HEK293 (cell line): ENCODE measurements at regions of chr17 and their contacts with region 1.

Region 1: DNA sequence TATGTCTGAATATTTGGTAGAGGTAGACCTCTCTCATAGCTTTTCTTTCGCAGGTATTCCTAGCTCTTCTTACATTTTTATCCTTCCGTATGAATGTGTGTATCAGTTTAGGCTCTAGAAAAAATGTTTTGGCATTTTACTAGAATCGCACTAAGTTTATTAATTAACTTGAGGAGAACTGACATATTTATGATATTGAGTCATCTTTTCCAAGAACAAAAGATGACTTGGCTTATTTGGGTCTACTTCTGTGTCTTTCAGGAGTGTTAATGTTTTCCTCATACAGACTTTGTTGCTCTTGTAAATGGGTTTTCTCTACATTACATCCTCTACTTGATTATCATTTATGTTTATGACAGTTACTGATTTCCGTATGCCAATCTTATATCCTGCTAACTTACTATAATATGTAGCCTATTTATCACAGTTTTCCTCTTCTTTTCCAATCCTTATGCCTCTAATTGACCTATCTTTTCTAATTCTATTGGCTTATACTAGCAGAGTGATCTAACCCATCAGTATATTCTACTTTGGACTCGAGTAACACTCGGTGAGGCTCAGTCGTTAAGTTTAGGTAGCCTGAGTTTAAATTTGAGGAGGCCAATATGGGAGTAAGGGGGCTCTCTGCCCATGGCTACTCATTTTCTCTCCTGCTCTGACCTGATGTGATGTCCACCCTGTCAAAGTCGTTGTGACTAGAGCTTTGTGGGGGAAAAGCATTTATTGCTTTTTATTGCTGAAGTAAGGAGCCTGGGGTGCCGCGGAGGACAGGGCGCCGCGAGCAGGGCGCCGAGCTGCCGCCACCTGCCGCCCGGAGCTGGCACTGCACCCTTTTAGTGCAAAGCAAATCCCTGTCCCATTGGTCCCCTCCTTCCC is 20.0 kb downstream of the ST6GALNAC1 start:
- H3K4me3 ChIP-seq: peak overlapping the region; percentile 21
- H3K27ac ChIP-seq: no peak overlapping the region
- H3K4me1 ChIP-seq: no peaks in the 10 kb centered on the region
- CTCF ChIP-seq: peak; percentile 82

Region 2: GRCh38 chr17:76523084-76524037 is 100.1 kb before region 1 on chr17:
- CTCF ChIA-PET with region 1: interaction called, 56 read pairs
- POLR2A ChIA-PET with region 1: no interaction called
- H3K4me3 ChIP-seq: no peak overlapping the region
- H3K27ac ChIP-seq: no peak overlapping the region
- H3K4me1 ChIP-seq: peaks cover 8% of the 10 kb centered on the region
- CTCF ChIP-seq: peak; percentile 98

Region 3: DNA sequence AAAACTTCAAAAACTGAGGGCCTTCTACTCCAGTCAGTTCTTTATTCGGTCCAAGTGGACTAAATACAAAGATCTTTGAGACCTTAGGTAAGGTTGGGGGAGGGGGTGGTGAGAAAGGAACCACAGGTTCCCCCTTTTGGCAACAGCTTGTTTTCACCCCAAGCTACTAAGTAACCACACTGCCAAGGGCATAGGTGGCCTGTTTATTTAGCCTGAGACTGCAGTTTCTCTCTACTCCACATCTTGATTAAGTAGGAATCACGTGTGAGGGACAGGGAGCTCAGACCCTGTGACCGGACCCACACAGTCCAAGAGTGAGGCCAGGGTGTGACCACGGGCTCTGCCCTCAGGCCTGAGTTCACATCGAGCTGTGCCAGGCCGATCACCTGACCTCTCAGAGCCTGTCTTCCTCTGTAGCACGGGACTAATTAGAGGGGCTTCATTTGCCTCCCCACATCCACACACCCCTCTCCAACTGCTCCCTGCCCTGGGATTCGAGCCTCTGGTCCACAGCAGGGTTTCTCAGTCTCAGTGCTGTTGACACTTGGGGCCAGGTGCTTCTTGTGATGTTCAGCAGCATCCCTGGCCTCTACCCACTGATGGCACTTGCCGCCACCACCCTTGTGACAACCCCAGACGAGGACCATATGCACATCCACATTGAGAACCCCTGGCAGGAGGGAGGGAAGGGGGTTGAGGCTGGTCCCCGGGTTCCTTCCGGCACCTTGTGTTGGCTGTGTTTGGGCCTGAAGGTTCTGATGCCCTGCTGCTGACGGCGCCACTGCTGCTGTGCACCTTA is 55.7 kb before region 1 on chr17:
- CTCF ChIA-PET with region 1: interaction called, 20 read pairs
- POLR2A ChIA-PET with region 1: interaction called, 6 read pairs
- H3K4me3 ChIP-seq: no peak overlapping the region
- H3K27ac ChIP-seq: 0 out of 2 replicates have a peak overlapping the region, but pooled peaks have one; percentile 5
- H3K4me1 ChIP-seq: no peaks in the 10 kb centered on the region
- CTCF ChIP-seq: no peak

Region 4: GRCh38 chr17:76612977-76613851 is 10.3 kb before region 1 on chr17:
- CTCF ChIA-PET with region 1: interaction called, 48 read pairs
- POLR2A ChIA-PET with region 1: interaction called, 3 read pairs
- H3K4me3 ChIP-seq: no peak overlapping the region
- H3K27ac ChIP-seq: no peak overlapping the region
- H3K4me1 ChIP-seq: 0 out of 2 replicates have a peak, but pooled peaks cover 3% of the 10 kb centered on the region
- CTCF ChIP-seq: no peak

Region 5: GRCh38 chr17:76659928-76660614 is 36.6 kb after region 1 on chr17:
- CTCF ChIA-PET with region 1: interaction called, 19 read pairs
- POLR2A ChIA-PET with region 1: no interaction called
- H3K4me3 ChIP-seq: no peak overlapping the region
- H3K27ac ChIP-seq: peak overlapping the region; percentile 44; the same call in 1 of the 2 replicates
- H3K4me1 ChIP-seq: peaks cover 10% of the 10 kb centered on the region
- CTCF ChIP-seq: no peak

Region 6: DNA sequence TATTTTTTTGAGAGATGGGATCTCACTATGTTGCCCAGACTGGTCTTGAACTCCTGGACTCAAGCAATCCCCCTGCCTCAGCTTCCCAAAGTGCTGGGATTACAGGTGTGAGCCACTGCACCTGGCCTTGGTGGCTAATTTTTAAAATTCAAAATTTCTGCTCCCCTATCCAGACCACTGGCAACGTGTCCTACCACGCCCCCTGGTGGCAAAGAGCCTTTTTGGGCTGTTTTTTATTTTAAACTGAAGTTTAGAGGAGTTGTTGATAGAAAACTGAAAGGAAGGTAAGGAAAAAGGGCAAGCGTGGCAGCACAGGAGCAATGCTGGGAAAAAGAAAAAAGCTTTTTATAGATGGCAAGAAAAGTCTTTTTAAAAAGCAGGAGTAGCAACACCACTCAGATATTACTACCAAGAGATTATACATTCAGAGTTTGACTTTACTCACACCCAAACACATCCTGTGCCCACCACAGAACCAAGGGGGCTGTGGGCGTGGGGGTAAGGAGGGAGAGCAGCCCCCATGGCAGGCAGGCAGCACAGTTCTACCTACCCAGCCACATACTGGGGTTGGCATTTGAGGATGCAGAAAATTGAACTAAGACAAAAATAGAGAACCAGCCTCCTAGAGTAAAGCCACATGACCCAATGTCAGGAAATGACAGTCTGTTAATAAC is 91.5 kb after region 1 on chr17:
- CTCF ChIA-PET with region 1: interaction called, 15 read pairs
- POLR2A ChIA-PET with region 1: no interaction called
- H3K4me3 ChIP-seq: no peak overlapping the region
- H3K27ac ChIP-seq: no peak overlapping the region
- H3K4me1 ChIP-seq: peaks cover 35% of the 10 kb centered on the region
- CTCF ChIP-seq: peak; percentile 66; the same call in 1 of the 2 replicates

Region 7: DNA sequence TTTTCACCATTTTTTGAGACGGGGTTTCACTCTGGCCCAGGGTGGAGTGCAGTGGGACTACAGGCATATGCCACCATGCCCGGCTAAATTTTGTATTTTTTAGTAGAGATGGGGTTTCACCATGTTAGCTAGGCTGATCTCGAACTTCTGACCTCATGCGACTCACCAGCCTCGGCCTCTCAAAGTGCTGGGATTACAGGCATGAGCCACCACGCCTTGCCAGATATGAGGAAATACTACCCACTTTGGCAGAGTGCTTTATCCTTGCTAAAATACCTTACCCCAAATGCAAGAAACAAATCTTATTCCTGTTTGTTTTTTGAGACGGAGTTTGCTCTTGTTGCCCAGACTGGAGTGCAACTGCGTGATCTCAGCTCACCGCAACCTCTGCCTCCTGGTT is 181.8 kb after region 1 on chr17:
- CTCF ChIA-PET with region 1: no interaction called
- POLR2A ChIA-PET with region 1: no interaction called
- H3K4me3 ChIP-seq: no peak overlapping the region
- H3K27ac ChIP-seq: no peak overlapping the region
- H3K4me1 ChIP-seq: no peaks in the 10 kb centered on the region
- CTCF ChIP-seq: no peak